HepG2 (cell line): ENCODE measurements at regions of chr16 and their contacts with region 1.

Region 1: DNA sequence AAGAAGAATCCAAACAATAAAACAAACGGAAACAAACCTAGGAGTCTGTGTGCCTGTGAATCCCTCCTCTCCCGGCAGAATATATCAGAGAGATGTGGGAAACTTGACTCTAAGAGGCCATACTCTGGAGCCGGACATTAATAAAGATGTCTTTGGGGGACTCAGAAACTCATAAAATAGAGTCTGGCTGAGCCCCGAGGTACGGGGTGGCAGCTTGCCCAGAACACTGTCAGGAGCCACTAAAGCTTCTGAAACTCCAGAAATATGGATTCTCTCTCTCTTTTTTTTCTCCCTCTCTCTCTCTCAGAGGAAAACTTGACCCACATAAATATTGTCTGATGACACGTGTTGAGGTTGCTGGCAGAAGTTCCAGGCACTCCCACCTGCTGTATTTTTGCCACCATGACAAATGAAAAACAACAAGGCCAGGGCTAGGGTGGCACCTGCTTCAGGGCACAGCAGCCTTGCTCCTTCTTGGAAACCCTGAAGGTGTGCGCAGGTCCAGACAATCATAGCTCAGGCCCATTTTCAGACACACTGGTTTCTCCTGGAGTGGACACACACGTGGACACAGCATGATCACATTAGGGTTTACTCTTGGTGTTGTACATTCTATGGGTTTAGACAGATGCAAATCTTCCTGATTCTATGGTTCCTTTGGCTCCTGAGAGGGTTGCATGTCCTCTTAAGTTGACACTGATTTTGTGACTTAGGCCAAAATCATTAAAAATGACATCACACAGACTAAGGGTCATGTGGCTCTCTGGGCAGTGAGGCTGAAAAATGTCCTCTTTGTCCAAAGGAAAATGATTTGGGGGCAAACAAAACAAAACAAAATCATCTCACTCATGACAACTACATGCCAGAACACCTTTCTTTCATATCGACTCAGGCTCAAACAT is 282.6 kb upstream of the IRX3 start:
- DNase-seq: no peak
- ATAC-seq: no peak
- H3K4me3 ChIP-seq: no peak overlapping the region
- H3K27ac ChIP-seq: no peak overlapping the region
- H3K4me1 ChIP-seq: no peaks in the 10 kb centered on the region
- H3K27me3 ChIP-seq: peaks cover 0 to 11% of the 10 kb centered on the region in 2 experiments; a peak in 1 of 5 replicates
- CTCF ChIP-seq: no peak
- EP300 ChIP-seq: no peak
- POLR2A ChIP-seq: no peak
- RAD21 ChIP-seq: no peak

Region 2: GRCh38 chr16:54326266-54326662 is 242.9 kb before region 1 on chr16:
- CTCF ChIA-PET with region 1: no interaction called
- POLR2A ChIA-PET with region 1: no interaction called
- in situ Hi-C with region 1: no loop called
- intact Hi-C with region 1: no loop called
- DNase-seq: no peak
- ATAC-seq: no peak
- H3K4me3 ChIP-seq: no peak overlapping the region
- H3K27ac ChIP-seq: no peak overlapping the region
- H3K4me1 ChIP-seq: no peaks in the 10 kb centered on the region
- H3K27me3 ChIP-seq: peaks cover 13 to 46% of the 10 kb centered on the region in 2 experiments
- CTCF ChIP-seq: no peak
- EP300 ChIP-seq: no peak
- POLR2A ChIP-seq: no peak
- RAD21 ChIP-seq: no peak

Region 3: DNA sequence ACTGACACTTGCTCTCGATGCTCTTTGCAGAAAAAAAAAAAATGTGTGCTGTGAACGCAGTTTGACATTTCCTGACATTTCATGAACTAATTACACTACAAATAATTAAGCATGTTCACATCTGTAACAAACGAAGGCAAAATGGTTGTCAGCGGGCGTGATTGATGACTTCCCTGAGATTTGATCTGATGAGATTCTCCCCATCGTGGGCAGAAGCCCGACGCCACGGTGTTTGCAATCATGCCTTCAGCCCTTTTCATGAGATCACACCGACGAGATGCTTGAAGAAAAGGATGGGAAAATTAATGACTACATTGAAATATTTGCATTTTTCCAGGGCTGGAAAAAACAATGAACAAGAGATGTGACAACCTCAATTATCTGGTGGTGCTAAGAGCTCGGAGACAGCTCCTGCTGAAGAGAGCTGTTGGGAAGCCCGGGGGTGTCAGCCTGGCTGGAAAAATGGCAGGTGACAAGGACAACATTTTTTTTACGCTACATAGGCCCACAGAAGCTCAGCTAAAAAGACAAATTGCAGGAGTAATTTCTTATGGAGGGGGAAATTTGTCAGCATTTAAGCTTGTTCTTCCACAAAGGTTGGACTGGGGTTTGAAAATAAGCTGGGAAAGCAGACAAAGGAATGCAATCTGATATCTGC is 23.2 kb before region 1 on chr16:
- CTCF ChIA-PET with region 1: no interaction called
- POLR2A ChIA-PET with region 1: no interaction called
- in situ Hi-C with region 1: no loop called
- intact Hi-C with region 1: loop called (anchors 1 kb)
- DNase-seq: no peak
- ATAC-seq: no peak
- H3K4me3 ChIP-seq: no peak overlapping the region
- H3K27ac ChIP-seq: no peak overlapping the region
- H3K4me1 ChIP-seq: no peaks in the 10 kb centered on the region
- H3K27me3 ChIP-seq: peaks cover 0 to 10% of the 10 kb centered on the region in 2 experiments; a peak in 2 of 5 replicates
- CTCF ChIP-seq: no peak
- EP300 ChIP-seq: no peak
- POLR2A ChIP-seq: no peak
- RAD21 ChIP-seq: no peak